Activated CD4-positive, alpha-beta T cell treated with anti-CD3 and anti-CD28 coated beads, Interleukin-2, amount 10 ng/mL, durations not matched to agents 24 days and 14 days (primary cell): ENCODE measurements at regions of chr17 and their contacts with region 1.

Region 1: DNA sequence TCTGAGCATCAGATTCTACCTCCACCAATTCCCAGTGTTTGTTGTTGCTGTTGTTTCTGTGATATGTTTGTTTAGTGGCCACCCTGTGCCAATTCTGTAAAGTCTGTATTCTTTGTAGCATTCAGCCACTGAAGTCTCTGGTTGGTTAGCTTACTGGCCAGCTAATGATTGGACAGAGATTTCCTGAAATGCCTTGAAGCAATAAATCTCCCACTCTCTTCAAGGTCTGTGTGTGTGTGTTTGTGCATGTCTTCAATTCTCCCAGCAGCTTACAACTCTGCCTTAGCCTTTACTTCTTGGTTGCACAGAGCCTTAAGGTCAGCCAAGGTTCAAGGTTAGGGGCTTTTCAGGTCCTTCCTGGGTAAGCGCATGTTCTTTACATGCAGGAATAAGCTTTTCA is 38.2 kb downstream of the PRPSAP2 start:
- DNase-seq: no peak
- H3K4me3 Mint-ChIP-seq: no peak overlapping the region
- H3K27ac Mint-ChIP-seq: no peak overlapping the region
- H3K4me1 Mint-ChIP-seq: peaks cover 11% of the 10 kb centered on the region
- H3K27me3 Mint-ChIP-seq: no peaks in the 10 kb centered on the region

Region 2: DNA sequence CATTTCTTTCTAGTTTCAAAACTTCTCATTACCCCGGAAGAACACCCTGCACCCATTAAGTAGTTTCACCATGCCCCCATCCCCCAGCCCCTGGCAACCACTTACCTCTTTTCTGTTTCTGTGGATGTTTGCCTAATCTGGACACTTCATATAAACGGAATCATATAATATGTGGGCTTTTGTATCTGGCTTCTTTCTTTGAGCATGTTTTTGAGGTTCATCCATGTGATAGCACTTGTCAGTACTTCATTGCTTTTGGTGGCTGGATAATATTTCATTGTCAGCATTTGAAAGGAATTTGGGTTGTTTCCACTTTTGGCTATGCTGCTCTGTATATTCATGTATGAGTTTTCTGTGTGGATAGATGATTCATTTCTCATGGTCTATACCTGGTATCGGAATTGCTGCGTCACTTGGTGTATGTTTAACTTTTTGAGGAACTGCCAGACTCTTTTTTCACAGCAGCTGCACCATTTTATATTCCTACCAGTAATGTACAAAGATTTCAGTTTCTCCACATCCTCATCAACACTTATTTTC is 25.8 kb after region 1 on chr17:
- intact Hi-C with region 1: loop called (anchors 1 kb)
- DNase-seq: peak; percentile 69
- H3K4me3 Mint-ChIP-seq: peak overlapping the region; percentile 64
- H3K27ac Mint-ChIP-seq: peak overlapping the region; percentile 90
- H3K4me1 Mint-ChIP-seq: peaks cover 51% of the 10 kb centered on the region
- H3K27me3 Mint-ChIP-seq: no peaks in the 10 kb centered on the region